AG04449 (cell line): ENCODE measurements at regions of chr12 and their contacts with region 1.

Region 1: GRCh38 chr12:52156736-52157565 is 34.9 kb downstream of the KRT80 start:
- DNase-seq: no peak
- H3K4me3 ChIP-seq: no peak overlapping the region
- CTCF ChIP-seq: peak; percentile 97

Region 2: GRCh38 chr12:51905471-51906429 is 251.2 kb before region 1 on chr12:
- CTCF ChIA-PET with region 1: no interaction called
- POLR2A ChIA-PET with region 1: no interaction called
- DNase-seq: no peak
- H3K4me3 ChIP-seq: no peak overlapping the region
- CTCF ChIP-seq: no peak

Region 3: GRCh38 chr12:51970904-51971646 is 185.9 kb before region 1 on chr12:
- CTCF ChIA-PET with region 1: no interaction called
- POLR2A ChIA-PET with region 1: no interaction called
- DNase-seq: no peak
- H3K4me3 ChIP-seq: no peak overlapping the region
- CTCF ChIP-seq: peak; percentile 61

Region 4: DNA sequence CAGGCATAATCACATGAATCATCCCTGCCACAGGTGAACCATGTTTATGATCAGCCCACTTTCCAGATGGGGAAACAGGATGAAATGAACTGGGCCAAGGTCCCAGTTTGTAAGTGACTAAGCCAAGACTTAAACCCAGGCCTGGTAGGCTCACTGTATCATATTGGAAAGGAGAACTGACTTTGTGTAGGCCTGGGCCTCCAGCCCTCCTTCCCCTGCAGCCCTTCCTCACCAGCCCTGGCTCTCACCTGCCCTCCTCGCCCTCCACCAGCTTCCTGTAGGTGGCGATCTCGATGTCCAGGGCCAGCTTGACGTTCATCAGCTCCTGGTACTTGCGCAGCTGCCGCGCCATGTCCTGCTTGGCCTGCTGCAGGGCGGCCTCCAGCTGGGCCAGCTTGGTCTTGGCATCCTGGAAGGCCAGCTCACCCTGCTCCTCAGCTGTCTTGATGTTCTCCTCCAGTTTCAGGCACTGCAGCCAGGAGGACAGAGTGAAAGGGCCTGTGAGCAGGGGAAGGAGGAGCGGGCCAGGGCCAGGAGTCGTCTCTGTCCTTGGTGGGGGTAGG is 15.1 kb after region 1 on chr12:
- CTCF ChIA-PET with region 1: interaction called, 10 read pairs
- POLR2A ChIA-PET with region 1: no interaction called
- DNase-seq: no peak
- H3K4me3 ChIP-seq: no peak overlapping the region
- CTCF ChIP-seq: peak; percentile 55

Region 5: GRCh38 chr12:52221912-52222457 is 65.0 kb after region 1 on chr12:
- CTCF ChIA-PET with region 1: interaction called, 12 read pairs
- POLR2A ChIA-PET with region 1: no interaction called
- DNase-seq: no peak
- H3K4me3 ChIP-seq: no peak overlapping the region
- CTCF ChIP-seq: peak; percentile 46

Region 6: DNA sequence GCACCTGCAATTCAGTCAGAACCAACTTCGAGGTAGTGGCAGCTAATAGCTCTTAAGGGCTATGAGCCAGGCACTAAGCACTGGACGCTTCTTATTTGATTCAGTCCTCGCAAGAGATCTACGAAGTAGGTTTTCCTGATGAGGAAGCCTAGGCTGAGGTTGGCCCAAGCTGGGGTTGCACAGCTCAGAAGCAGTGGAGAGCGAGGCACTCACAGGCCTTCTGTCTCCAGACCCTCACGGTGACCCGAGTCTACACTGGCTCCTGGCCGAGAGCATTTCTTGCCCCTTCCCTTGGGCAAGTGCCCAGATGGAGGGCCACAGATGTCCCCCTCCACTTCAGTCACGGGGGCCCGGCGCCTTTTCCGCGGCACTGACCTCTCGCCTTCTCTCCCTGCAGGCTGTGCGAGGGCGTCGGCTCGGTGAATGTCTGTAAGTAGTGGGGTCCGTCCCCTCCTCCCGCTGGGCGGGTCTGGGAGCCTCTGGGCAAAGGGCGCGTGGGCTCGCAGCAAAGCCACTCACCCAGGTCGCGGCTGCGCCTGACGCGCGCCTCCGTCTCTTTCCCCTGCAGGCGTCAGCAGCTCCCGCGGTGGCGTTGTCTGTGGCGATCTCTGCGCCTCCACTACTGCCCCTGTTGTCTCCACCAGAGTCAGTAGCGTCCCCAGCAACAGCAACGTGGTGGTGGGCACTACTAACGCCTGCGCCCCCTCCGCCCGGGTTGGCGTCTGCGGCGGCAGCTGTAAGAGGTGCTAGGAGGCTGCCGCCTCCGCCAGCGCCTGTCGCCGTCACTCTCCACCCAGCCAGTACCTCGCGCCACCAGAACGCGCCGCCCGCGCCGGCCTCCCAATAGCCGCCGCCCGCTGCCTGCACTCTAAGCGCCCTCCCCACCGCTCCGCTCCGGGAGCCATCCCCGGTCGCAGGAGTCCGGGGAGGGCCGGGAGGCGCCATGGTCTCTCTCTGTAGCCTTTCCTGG is 151.2 kb after region 1 on chr12:
- CTCF ChIA-PET with region 1: interaction called, 12 read pairs
- POLR2A ChIA-PET with region 1: no interaction called
- DNase-seq: no peak
- H3K4me3 ChIP-seq: peak overlapping the region; percentile 53
- CTCF ChIP-seq: no peak

Region 7: DNA sequence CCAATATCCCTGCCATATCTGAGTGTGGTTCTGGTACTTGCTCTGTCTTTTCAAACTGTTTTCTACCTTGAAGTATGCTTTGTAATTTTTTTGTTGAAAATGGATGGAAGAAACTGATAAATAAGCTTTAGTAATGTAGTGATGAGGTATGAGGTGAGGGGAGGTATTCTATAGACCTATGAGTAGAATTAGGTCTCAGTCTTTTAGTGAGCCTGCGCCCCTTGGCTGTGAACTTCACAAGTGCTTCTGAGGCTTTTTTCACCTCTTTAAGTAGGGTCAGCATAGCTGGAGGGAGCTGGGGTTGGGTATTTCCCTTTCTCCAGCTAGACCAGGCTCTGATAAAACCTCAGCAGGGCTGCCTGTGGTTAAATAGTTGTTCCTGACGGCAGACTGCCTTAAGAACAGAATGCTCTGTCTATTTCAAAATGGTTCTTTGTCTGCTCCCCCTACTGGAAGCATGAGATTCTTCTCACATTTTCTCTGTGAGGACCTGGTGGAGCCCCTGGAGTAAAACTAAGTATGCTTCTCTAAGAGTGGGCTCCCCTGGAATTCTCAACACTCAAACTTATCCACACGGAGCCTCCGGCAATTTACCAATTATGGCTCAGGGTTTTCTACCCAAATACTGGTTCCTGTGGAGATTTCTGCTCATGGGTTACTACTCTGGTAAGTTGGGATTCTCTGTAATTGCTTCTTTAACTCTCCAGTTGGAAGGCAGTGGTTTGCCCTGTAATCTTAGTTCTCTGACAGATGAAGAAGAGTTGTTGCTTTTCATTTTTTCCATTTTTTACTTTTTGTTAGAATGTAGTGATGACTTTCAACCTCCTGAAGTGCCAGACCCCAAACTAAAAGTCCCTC is 350.1 kb after region 1 on chr12:
- CTCF ChIA-PET with region 1: interaction called, 26 read pairs
- POLR2A ChIA-PET with region 1: no interaction called
- DNase-seq: peak; percentile 51
- H3K4me3 ChIP-seq: no peak overlapping the region
- CTCF ChIP-seq: peak; percentile 46

Region 8: DNA sequence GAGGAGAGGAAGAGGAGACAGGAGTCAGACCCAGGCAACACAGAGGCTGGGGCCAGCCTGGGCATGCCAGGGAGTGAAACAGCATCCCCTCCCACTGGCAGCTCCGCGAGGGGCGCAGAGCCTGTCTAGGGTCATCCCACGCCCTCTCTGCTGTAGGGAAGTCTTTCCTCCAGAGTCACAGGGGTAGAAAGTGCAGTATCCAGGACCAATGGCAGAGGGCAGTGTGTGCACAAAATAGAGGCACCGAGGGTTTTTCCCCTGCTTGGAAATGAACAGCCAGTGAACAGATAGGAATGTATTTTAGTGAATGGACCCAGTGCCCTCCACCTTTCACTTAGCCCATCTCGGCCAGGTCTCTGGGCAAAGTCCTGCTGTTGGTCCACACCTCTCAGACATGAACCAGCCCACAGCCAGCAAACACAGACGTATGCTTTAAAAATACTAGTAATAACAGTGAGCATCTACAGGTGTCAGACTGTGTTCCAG is 426.1 kb after region 1 on chr12:
- CTCF ChIA-PET with region 1: interaction called, 29 read pairs
- POLR2A ChIA-PET with region 1: no interaction called
- DNase-seq: peak; percentile 4
- H3K4me3 ChIP-seq: no peak overlapping the region
- CTCF ChIP-seq: peak; percentile 82

Region 9: GRCh38 chr12:52870351-52871290 is 713.7 kb after region 1 on chr12:
- CTCF ChIA-PET with region 1: interaction called, 41 read pairs
- POLR2A ChIA-PET with region 1: no interaction called
- DNase-seq: no peak
- H3K4me3 ChIP-seq: no peak overlapping the region
- CTCF ChIP-seq: peak; percentile 86